CD8-positive, alpha-beta memory T cell (primary cell): ENCODE measurements at regions of chr11 and their contacts with region 1.

Region 1: GRCh38 chr11:36564376-36565030 is 3.3 kb upstream of the RAG1 start:
- DNase-seq: peak; percentile 10 to 57 (median 30)
- H3K4me3 ChIP-seq: no peak overlapping the region
- H3K4me3 Mint-ChIP-seq: peak overlapping the region; percentile 38 to 83 (median 79)
- H3K27ac ChIP-seq: no peak overlapping the region
- H3K27ac Mint-ChIP-seq: peak overlapping the region in 1 of 8 donors; percentile 1
- H3K4me1 ChIP-seq: peaks cover 12% of the 10 kb centered on the region
- H3K4me1 Mint-ChIP-seq: peaks cover 12 to 23% (median 22%) of the 10 kb centered on the region in 3 donors
- H3K27me3 ChIP-seq: no peaks in the 10 kb centered on the region
- H3K27me3 Mint-ChIP-seq: peaks cover 6 to 29% of the 10 kb centered on the region in 2 donors

Region 2: GRCh38 chr11:36478700-36479329 is 85.7 kb before region 1 on chr11:
- CTCF ChIA-PET with region 1: no interaction called
- POLR2A ChIA-PET with region 1: no interaction called
- DNase-seq: peak in 3 of 5 donors; percentile 14 to 30 (median 18)
- H3K4me3 ChIP-seq: no peak overlapping the region
- H3K4me3 Mint-ChIP-seq: no peak overlapping the region
- H3K27ac ChIP-seq: no peak overlapping the region
- H3K27ac Mint-ChIP-seq: no peak overlapping the region
- H3K4me1 ChIP-seq: no peaks in the 10 kb centered on the region
- H3K4me1 Mint-ChIP-seq: peaks cover 5 to 13% (median 13%) of the 10 kb centered on the region in 3 donors
- H3K27me3 ChIP-seq: no peaks in the 10 kb centered on the region
- H3K27me3 Mint-ChIP-seq: no peaks in the 10 kb centered on the region

Region 3: DNA sequence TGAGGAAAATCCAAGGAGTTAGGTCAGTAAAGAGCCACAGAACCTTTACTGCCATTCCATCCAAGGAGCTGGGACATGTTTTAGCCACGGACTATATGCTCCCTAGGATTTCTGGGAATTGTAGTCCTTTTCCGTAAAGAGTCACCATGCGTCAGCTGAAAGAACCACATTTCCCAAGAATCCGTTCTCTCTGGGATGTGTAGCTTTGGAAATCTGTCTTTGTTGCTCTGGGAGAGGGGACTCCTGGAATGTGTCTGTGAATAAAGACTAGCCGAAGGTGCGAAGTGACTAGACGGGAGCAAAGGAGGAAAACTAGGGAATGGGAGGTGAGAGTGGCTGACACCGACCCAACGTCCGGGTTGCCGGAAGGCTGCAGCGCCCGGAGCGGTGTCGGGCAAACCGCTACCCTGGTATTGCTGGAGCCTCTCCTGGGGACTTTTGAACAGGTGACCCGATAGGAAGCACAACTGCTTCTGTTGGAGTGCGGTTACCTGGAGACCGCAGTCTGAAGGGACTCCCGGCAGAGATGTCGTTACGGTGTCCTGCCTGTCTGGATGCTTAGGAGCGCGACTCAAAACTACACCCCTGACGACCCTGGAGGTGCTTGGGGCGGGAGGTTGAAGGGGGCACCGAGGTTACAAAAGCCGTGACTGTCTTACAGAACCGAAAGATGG is 29.9 kb after region 1 on chr11 and contains the start of gene IFTAP:
- CTCF ChIA-PET with region 1: no interaction called
- POLR2A ChIA-PET with region 1: no interaction called
- DNase-seq: peak in 2 of 5 donors; percentile 17 to 25
- H3K4me3 ChIP-seq: peak within 1 kb of the TSS; percentile 70
- H3K4me3 Mint-ChIP-seq: peak within 1 kb of the TSS; percentile 87 to 95 (median 93)
- H3K27ac ChIP-seq: no peak within 1 kb of the TSS
- H3K27ac Mint-ChIP-seq: peak within 1 kb of the TSS in 5 of 8 donors; percentile 38 to 77 (median 59)
- H3K4me1 ChIP-seq: no peaks in the 10 kb centered on the region
- H3K4me1 Mint-ChIP-seq: peaks cover 6 to 14% (median 10%) of the 10 kb centered on the region in 3 donors
- H3K27me3 ChIP-seq: peaks cover 17% of the 10 kb centered on the region
- H3K27me3 Mint-ChIP-seq: peaks cover 22 to 63% of the 10 kb centered on the region in 2 donors
- total RNA-seq, gene IFTAP: 5.7 to 6.0 TPM

Region 4: DNA sequence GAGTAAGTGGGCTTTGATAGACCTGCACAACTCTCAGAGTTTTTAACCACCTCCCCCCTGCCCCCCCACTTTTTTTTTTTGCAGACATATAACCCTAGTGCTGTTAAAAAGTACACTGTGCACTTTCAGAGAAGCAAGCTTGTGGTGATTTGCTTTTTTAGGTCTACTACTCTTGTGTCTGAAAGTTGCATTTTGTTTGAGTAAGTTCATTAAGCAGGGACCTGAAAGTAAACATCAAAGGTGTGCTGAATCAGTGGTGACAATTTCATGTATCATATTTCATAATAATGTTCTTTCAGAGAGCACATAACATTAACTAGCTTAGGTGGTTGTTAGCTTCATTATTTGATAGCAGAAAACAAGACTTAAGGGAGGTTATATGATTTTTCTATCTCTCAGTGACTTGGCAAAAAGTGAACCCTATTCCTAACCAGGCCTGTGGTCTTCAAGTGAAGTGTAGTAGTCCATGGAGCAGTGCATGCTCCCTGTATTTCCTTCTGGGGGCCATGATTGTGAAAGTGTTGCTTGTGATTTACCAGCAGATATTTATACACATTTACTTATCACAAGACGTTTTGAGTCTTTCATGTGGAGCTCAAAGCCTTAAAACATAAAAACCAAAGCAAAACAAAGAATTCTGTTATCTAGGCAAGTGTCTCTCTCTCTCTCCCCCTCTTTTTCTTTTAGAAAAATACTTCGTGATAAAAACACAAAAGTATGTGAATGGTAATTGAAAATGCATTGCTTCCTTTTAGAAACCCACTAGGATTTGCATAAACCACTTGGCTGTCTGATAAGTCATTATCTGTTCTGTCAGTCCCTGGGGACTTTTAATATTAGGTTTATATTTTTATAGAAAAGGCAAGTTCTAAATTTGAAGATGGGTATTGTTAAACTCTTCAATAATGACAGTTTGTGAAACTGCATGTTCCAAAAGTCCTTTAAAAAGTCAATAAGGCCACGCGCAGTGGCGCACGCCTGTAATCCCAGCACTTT is 41.0 kb after region 1 on chr11:
- CTCF ChIA-PET with region 1: no interaction called
- POLR2A ChIA-PET with region 1: no interaction called
- DNase-seq: no peak
- H3K4me3 ChIP-seq: no peak overlapping the region
- H3K4me3 Mint-ChIP-seq: no peak overlapping the region
- H3K27ac ChIP-seq: no peak overlapping the region
- H3K27ac Mint-ChIP-seq: no peak overlapping the region
- H3K4me1 ChIP-seq: no peaks in the 10 kb centered on the region
- H3K4me1 Mint-ChIP-seq: no peaks in the 10 kb centered on the region
- H3K27me3 ChIP-seq: no peaks in the 10 kb centered on the region
- H3K27me3 Mint-ChIP-seq: peaks cover 3 to 38% of the 10 kb centered on the region in 2 donors

Region 5: GRCh38 chr11:36672813-36673450 is 108.4 kb after region 1 on chr11:
- CTCF ChIA-PET with region 1: interaction called, 23 read pairs
- POLR2A ChIA-PET with region 1: interaction called, 4 read pairs
- DNase-seq: peak in 2 of 5 donors; percentile 24 to 32
- H3K4me3 ChIP-seq: no peak overlapping the region
- H3K4me3 Mint-ChIP-seq: no peak overlapping the region
- H3K27ac ChIP-seq: no peak overlapping the region
- H3K27ac Mint-ChIP-seq: no peak overlapping the region
- H3K4me1 ChIP-seq: no peaks in the 10 kb centered on the region
- H3K4me1 Mint-ChIP-seq: no peaks in the 10 kb centered on the region
- H3K27me3 ChIP-seq: no peaks in the 10 kb centered on the region
- H3K27me3 Mint-ChIP-seq: peaks cover 12 to 31% of the 10 kb centered on the region in 2 donors

Region 6: DNA sequence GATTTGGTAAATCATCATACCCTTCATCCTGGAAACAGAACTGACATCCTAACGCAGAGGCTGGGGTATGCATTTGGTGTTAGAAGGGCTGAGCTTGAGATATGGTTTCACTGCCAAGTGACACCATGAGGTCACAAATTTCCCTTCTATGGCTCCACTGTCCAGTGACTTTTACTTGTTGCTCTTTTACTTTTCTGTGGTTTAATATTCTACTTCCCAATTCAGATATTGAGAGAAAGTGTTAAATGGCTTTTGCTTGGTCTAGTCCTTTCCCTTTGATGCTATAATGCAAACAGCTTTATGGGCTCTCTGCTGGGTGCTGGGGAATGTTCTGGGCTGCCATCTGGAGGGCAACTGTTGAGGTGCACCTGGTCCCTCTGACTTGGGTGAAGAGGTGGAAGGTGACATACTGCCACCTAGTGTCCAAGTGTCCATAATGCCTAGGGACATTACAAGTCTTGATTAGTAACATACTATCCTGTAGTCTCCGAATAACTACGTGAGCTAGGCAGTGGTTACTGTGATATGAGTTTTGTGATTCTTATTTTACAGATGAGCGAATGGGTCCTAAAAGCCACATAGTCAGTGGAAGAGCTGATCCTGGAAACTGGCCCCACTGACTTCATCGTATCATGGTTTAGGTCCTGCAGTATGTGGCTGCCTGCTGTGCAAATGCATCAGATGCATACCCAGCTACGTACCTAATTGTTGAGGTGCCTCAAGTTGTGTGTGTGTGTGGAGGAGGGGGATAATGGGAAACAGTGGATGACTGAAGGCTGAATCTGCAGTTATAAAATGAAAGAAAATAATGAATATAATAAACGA is 182.6 kb after region 1 on chr11:
- CTCF ChIA-PET with region 1: interaction called, 54 read pairs
- POLR2A ChIA-PET with region 1: no interaction called
- DNase-seq: peak; percentile 60 to 84 (median 69)
- H3K4me3 ChIP-seq: no peak overlapping the region
- H3K4me3 Mint-ChIP-seq: no peak overlapping the region
- H3K27ac ChIP-seq: no peak overlapping the region
- H3K27ac Mint-ChIP-seq: no peak overlapping the region
- H3K4me1 ChIP-seq: no peaks in the 10 kb centered on the region
- H3K4me1 Mint-ChIP-seq: peaks cover 4 to 6% (median 5%) of the 10 kb centered on the region in 3 donors
- H3K27me3 ChIP-seq: no peaks in the 10 kb centered on the region
- H3K27me3 Mint-ChIP-seq: peaks cover 18 to 28% of the 10 kb centered on the region in 2 donors

Region 7: GRCh38 chr11:37182031-37182430 is 617.5 kb after region 1 on chr11:
- CTCF ChIA-PET with region 1: no interaction called
- POLR2A ChIA-PET with region 1: no interaction called
- DNase-seq: no peak
- H3K4me3 ChIP-seq: no peak overlapping the region
- H3K4me3 Mint-ChIP-seq: no peak overlapping the region
- H3K27ac ChIP-seq: no peak overlapping the region
- H3K27ac Mint-ChIP-seq: no peak overlapping the region
- H3K4me1 ChIP-seq: no peaks in the 10 kb centered on the region
- H3K4me1 Mint-ChIP-seq: no peaks in the 10 kb centered on the region
- H3K27me3 ChIP-seq: no peaks in the 10 kb centered on the region
- H3K27me3 Mint-ChIP-seq: no peaks in the 10 kb centered on the region